SK-N-SH (cell line): ENCODE measurements at regions of chr12 and their contacts with region 1.

Region 1: GRCh38 chr12:57069523-57069922 is 9.1 kb downstream of the NEMP1 start:
- DNase-seq: peak; percentile 59
- H3K4me3 ChIP-seq: no peak overlapping the region; a peak in 1 of 4 replicates
- H3K27ac ChIP-seq: no peak overlapping the region
- H3K4me1 ChIP-seq: peaks cover 0 to 2% of the 10 kb centered on the region in 2 experiments; a peak in 1 of 4 replicates
- H3K27me3 ChIP-seq: no peaks in the 10 kb centered on the region
- CTCF ChIP-seq: peak; percentile 84
- EP300 ChIP-seq: no peak
- RAD21 ChIP-seq: peak; percentile 96

Region 2: DNA sequence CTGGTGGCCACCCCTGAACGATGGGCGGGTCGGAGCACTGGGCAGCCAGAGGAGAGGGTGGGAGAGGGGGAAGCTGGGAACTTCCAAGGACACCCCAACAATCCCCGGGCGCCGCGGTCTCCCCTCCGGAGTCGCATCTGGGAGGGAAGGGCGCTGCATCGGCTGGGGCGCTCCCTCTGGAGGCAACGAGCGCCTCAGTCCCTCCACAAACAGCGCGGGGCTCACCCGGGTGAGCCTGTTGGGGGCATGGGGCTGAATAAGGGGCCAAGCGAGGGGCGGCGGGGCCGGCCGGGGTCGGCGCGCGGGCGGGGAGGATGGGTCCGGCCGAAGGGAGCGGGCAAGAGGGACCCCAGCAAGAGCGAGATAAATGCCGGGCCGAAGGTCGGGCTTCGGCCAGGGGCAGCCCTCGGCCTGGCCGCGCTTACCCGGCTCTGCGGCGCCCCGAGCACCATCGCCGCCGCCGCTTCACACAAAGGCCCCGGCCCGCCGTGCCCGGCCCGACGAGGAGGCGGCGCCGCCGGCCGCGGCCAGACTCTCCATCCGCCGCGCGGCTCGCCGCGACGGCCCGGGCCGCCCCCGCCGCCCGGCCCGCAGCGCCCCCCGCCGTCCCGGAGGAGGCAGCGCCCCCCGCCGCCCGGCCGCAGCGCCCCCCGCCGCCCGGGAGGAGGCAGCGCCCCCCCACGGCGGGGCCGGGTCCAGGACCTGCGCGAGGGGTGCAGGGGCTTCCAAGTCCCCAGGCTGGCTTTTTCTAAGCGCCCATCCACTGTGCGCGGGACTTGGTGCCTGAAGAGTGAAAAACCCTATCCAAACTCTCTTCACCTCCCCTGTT is 63.3 kb before region 1 on chr12 and contains the start of gene ZBTB39:
- CTCF ChIA-PET with region 1: interaction called, 91 read pairs
- POLR2A ChIA-PET with region 1: interaction called, 3 read pairs
- DNase-seq: peak; percentile 99
- H3K4me3 ChIP-seq: peak within 1 kb of the TSS; percentile 89 to 100
- H3K27ac ChIP-seq: peak within 1 kb of the TSS; percentile 34 to 69; a peak in 2 of 4 replicates
- H3K4me1 ChIP-seq: peaks cover 6 to 14% of the 10 kb centered on the region in 2 experiments; a peak in 3 of 4 replicates
- H3K27me3 ChIP-seq: no peaks in the 10 kb centered on the region
- CTCF ChIP-seq: peak; percentile 69
- EP300 ChIP-seq: no peak
- RAD21 ChIP-seq: no peak
- polyA plus RNA-seq, gene ZBTB39: 3.7 and 4.8 TPM in 2 replicates

Region 3: GRCh38 chr12:57012600-57013465 is 56.7 kb before region 1 on chr12:
- CTCF ChIA-PET with region 1: interaction called, 91 read pairs
- POLR2A ChIA-PET with region 1: interaction called, 3 read pairs
- DNase-seq: no peak
- H3K4me3 ChIP-seq: no peak overlapping the region
- H3K27ac ChIP-seq: no peak overlapping the region
- H3K4me1 ChIP-seq: peaks cover 0 to 8% of the 10 kb centered on the region in 2 experiments; a peak in 1 of 4 replicates
- H3K27me3 ChIP-seq: peaks cover 38% of the 10 kb centered on the region
- CTCF ChIP-seq: no peak
- EP300 ChIP-seq: no peak
- RAD21 ChIP-seq: peak; percentile 56

Region 4: GRCh38 chr12:57088459-57089248 is 19.1 kb after region 1 on chr12 and contains the start of gene NAB2:
- CTCF ChIA-PET with region 1: interaction called, 339 read pairs
- POLR2A ChIA-PET with region 1: interaction called, 3 read pairs
- DNase-seq: peak; percentile 96
- H3K4me3 ChIP-seq: peak within 1 kb of the TSS; percentile 77 to 90
- H3K27ac ChIP-seq: peak within 1 kb of the TSS; percentile 96 to 98
- H3K4me1 ChIP-seq: peaks cover 22 to 23% of the 10 kb centered on the region in 2 experiments; a peak in 2 of 4 replicates
- H3K27me3 ChIP-seq: no peaks in the 10 kb centered on the region
- CTCF ChIP-seq: no peak
- EP300 ChIP-seq: no peak
- RAD21 ChIP-seq: no peak
- polyA plus RNA-seq, gene NAB2: 23.7 and 24.9 TPM in 2 replicates

Region 5: GRCh38 chr12:57118711-57119271 is 49.3 kb after region 1 on chr12:
- CTCF ChIA-PET with region 1: interaction called, 30 read pairs
- POLR2A ChIA-PET with region 1: no interaction called
- DNase-seq: no peak
- H3K4me3 ChIP-seq: no peak overlapping the region
- H3K27ac ChIP-seq: no peak overlapping the region
- H3K4me1 ChIP-seq: no peaks in the 10 kb centered on the region
- H3K27me3 ChIP-seq: no peaks in the 10 kb centered on the region
- CTCF ChIP-seq: no peak
- EP300 ChIP-seq: no peak
- RAD21 ChIP-seq: no peak

Region 6: GRCh38 chr12:57182921-57183790 is 113.6 kb after region 1 on chr12:
- CTCF ChIA-PET with region 1: interaction called, 14 read pairs
- POLR2A ChIA-PET with region 1: no interaction called
- DNase-seq: peak; percentile 96
- H3K4me3 ChIP-seq: no peak overlapping the region
- H3K27ac ChIP-seq: no peak overlapping the region
- H3K4me1 ChIP-seq: no peaks in the 10 kb centered on the region
- H3K27me3 ChIP-seq: no peaks in the 10 kb centered on the region
- CTCF ChIP-seq: peak; percentile 87
- EP300 ChIP-seq: no peak
- RAD21 ChIP-seq: peak; percentile 90

Region 7: DNA sequence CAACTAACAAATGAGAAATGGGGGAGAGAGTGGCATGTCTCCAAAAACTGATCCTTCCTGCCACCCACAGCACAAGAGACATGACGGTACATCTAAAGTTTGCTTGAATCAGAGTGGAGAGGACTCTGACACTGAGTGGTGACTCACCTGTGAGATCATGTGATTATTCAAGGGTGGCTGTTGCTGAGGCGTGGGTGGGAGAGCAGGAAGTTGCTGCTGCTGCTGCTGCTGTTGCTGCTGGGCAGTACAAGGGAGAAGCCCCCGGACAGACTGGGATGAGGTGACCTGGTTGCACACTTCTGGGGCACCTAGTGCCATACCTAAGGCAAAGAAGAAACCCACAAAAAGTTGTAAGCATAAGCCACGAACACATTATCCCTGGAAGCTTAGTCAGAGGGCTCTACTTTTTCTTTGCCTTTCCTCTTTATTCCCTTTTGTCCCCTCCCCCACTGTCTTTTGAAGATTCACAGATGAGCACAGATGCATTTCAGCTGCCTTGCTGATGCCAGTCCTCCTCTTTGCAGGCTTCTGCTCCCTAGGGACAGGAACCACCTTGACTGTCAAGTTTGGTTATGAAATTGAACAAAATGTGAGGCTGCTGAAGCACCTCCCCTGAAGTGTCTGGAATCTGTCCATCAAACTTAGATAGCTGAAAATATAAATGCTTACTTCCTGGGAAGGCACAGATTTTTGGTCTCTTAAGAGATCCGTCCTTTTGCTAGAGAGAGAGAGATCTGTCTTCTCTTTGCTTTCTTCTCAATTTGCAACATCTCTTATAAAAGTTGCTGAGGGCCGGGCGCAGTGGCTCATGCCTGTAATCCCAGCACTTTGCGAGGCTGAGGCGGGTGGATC is 210.9 kb after region 1 on chr12:
- CTCF ChIA-PET with region 1: no interaction called
- POLR2A ChIA-PET with region 1: no interaction called
- DNase-seq: no peak
- H3K4me3 ChIP-seq: peak overlapping the region in 1 of 2 experiments; percentile 30; a peak in 2 of 4 replicates
- H3K27ac ChIP-seq: peak overlapping the region; percentile 32 to 84
- H3K4me1 ChIP-seq: peaks cover 2 to 13% of the 10 kb centered on the region in 2 experiments; a peak in 2 of 4 replicates
- H3K27me3 ChIP-seq: no peaks in the 10 kb centered on the region
- CTCF ChIP-seq: no peak
- EP300 ChIP-seq: peak in 1 of 2 experiments; percentile 45; a peak in 1 of 4 replicates
- RAD21 ChIP-seq: no peak

Region 8: GRCh38 chr12:57352166-57352565 is 282.6 kb after region 1 on chr12:
- CTCF ChIA-PET with region 1: no interaction called
- POLR2A ChIA-PET with region 1: no interaction called
- DNase-seq: no peak
- H3K4me3 ChIP-seq: no peak overlapping the region
- H3K27ac ChIP-seq: no peak overlapping the region
- H3K4me1 ChIP-seq: no peaks in the 10 kb centered on the region
- H3K27me3 ChIP-seq: no peaks in the 10 kb centered on the region
- CTCF ChIP-seq: no peak
- EP300 ChIP-seq: no peak
- RAD21 ChIP-seq: no peak